Activated CD4-positive, alpha-beta T cell treated with anti-CD3 and anti-CD28 coated beads for 36 hours (primary cell): ENCODE measurements at regions of chr10 and their contacts with region 1.

Region 1: DNA sequence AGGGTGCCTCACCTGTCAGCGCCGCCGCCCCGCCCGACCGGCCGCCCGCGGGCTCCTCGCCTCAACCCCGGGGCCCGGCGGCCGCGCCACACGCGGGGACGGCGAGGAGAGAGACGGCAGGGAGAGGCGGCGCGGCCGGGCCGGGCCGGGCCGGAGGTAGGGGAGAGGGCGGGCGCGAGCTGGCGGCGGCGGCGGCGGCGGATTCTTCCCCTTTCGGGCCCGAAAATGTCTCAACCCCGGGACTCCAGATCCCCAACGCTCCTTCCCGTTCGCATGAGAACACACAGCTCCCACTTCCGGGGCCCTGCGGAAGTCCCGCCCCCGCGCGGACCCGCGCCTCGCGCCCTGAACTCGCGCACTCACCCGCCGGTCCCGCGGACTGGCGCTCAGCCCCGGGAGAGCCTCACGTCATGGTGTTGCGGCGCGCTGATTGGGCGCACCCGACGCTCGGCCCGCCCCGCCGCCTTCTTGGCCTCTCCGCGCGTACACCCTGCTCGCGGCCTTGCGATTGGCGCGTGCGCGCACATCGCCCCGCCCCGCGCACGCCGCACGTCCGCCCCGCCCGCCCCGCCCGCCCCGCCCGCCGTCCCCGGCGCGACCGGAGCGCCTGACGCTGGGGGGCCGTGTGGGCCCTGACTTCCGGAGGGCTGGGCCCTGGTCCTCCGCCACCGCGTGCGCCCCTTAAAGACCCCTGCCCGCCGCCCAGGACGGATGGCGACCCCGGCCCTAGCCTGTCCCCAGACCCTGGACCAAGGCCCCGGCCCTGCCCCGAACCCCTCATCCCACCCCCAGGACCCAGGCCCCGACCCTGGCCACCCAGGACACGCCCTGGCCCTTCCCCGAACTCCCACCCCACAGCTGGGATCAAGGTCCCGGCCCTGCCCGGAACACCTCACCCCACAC is at the start of gene LARP4B:
- DNase-seq: peak; percentile 98
- ATAC-seq: peak; percentile 99
- H3K4me3 Mint-ChIP-seq: peak within 1 kb of the TSS; percentile 82
- H3K27ac Mint-ChIP-seq: peak within 1 kb of the TSS; percentile 85
- H3K4me1 Mint-ChIP-seq: peaks cover 37% of the 10 kb centered on the region
- H3K27me3 Mint-ChIP-seq: no peaks in the 10 kb centered on the region
- total RNA-seq, gene LARP4B: 88.2 to 97.5 TPM

Region 2: DNA sequence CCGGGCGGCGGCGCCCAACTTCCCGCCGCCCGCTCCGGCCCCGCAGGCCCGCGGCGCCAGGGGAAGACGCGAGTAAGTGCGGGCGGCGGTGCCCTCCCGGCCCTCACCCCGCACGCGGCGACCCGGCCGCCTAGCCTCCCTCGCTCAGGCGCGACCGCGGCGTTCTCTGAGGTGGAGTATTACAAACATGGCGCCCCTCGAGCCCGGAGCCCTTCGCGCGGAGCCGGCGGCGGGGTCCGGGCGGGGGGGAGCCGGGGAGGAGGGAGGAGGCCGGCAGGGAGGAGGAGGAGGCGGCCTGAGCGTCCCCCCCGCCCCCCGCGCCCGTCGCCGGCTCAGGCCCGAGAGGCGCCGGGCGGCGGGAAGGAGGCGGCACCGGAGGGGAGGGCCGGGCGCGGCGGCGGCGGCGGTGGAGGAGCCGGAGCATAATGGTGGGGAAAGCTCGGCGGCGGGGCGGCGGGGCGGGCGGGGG is 796.5 kb before region 1 on chr10 and contains the start of gene ZMYND11:
- CTCF ChIA-PET with region 1: no interaction called
- POLR2A ChIA-PET with region 1: no interaction called
- intact Hi-C with region 1: loop called in 1 of 2 experiments (anchors 1 kb)
- DNase-seq: peak; percentile 74
- ATAC-seq: peak; percentile 25
- H3K4me3 Mint-ChIP-seq: peak within 1 kb of the TSS; percentile 84
- H3K27ac Mint-ChIP-seq: peak within 1 kb of the TSS; percentile 90
- H3K4me1 Mint-ChIP-seq: peaks cover 43% of the 10 kb centered on the region
- H3K27me3 Mint-ChIP-seq: no peaks in the 10 kb centered on the region
- total RNA-seq, gene ZMYND11: 13.2 to 16.9 TPM

Region 3: DNA sequence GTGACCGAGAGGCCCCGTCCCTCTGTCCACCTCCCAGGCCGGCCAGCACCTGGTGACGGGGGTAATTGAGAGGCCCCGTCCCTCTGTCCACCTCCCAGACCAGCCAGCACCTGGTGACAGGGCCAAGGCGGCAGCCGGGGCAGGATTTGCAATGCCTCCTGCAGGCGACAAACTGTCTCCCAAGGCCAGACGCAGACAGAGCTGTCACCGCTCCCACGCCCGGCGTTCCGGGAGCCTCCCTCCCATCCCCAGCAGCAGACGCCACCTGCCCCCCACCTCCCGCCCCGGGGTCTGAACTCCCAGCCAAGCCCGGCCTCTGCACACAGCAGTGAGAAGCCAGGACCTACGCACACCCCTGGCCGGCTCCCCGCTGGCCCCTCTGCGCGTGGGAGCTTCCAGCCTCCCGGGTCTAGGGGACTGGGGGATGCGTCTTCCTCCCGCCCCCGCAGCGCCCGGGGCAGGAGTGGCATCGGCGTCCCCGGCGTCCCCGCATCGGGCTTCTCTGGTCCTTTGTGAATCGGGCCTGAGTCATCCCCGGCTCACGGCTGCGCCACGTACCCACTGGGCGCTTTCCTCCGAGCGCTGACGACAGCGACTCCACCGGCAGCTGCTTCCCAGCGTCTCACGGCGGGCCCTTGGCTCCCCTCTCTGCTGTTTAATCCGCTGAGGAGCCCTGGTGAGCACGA is 147.1 kb before region 1 on chr10:
- CTCF ChIA-PET with region 1: no interaction called
- POLR2A ChIA-PET with region 1: no interaction called
- intact Hi-C with region 1: loop called in 1 of 2 experiments (anchors 1 kb)
- DNase-seq: peak; percentile 89
- ATAC-seq: peak; percentile 95
- H3K4me3 Mint-ChIP-seq: no peak overlapping the region
- H3K27ac Mint-ChIP-seq: no peak overlapping the region
- H3K4me1 Mint-ChIP-seq: peaks cover 4% of the 10 kb centered on the region
- H3K27me3 Mint-ChIP-seq: peaks cover 14% of the 10 kb centered on the region

Region 4: DNA sequence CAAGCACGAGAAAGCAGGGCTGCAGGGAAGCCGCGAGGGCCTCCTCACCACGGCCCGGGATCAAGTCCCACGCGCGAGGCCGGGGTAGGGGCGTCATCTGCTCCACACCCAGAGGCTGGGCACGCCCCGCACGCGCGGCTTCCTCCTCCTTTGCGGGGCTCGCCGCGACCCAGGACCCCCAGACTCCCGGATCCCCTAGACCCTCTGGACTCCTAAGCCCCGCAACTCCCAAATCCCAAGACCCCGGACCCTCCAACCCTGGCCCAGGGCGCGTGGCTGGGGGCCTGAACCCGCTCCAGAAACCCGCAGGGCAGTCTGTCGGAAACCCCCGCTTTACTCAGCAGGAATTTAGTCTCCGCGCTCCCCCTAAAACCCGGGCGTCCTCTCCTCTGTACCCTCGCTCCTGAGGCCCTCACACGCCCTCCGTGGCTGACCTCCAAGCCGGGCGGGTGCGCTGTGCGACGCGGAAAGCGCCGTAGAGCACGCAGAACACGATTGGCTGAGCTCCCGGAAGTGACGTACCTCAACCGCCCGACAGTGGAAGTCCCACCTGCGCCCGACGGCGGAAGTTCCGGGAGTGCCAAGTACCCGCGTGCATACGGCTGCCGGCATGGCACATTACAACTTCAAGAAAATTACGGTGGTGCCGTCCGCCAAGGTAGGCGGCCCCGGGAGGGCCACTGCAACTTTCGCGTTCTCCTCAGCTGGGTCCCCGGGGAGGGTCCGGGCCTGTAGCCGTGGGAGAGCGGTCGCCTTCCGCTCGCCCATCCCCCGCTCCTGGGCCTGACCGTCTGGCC is 56.4 kb after region 1 on chr10 and contains the start of gene GTPBP4:
- CTCF ChIA-PET with region 1: interaction called, 3 read pairs
- POLR2A ChIA-PET with region 1: interaction called, 5 read pairs
- intact Hi-C with region 1: loop called (anchors 1 kb)
- DNase-seq: peak; percentile 98
- ATAC-seq: peak; percentile 98
- H3K4me3 Mint-ChIP-seq: peak within 1 kb of the TSS; percentile 93
- H3K27ac Mint-ChIP-seq: peak within 1 kb of the TSS; percentile 96
- H3K4me1 Mint-ChIP-seq: peaks cover 40% of the 10 kb centered on the region
- H3K27me3 Mint-ChIP-seq: no peaks in the 10 kb centered on the region
- total RNA-seq, gene GTPBP4: 109 to 116 TPM

Region 5: DNA sequence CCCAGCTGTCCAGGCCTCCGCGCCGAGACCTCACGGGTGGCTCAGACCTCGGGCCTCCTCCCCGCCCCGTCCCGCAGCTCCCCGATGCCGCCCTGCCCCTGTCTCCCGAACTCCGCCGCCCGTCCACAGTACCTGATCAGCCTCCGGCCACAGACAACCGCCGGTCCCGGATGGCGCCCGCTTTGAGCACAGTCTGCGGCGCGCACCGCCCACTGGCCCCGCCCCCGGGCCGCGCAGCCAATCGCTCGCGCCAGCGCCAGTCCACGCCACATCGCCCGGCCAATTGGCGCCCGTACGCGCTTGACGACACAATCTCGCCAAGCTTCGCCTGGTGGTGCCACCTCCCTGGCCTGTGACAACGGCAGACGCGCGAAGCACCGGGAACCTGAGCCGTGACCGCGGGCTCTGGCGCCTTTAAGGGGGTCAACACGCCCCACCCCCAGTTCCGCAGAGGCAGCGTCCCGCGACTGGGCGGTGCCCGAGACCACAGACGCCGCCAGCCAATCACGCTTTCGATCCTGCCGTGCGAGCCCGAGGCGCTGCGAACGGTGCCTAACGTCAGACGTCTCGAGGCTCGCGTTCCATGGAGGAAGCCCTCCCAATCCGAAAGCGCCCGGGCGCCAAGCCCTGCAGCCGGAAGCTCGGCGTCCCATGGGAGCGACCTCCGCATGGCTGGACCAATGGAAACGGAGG is 117.2 kb after region 1 on chr10 and contains the start of gene IDI1:
- CTCF ChIA-PET with region 1: no interaction called
- POLR2A ChIA-PET with region 1: interaction called, 4 read pairs
- intact Hi-C with region 1: loop called (anchors 1 to 2 kb)
- DNase-seq: peak; percentile 97
- ATAC-seq: peak; percentile 85
- H3K4me3 Mint-ChIP-seq: peak within 1 kb of the TSS; percentile 98
- H3K27ac Mint-ChIP-seq: peak within 1 kb of the TSS; percentile 96
- H3K4me1 Mint-ChIP-seq: peaks cover 64% of the 10 kb centered on the region
- H3K27me3 Mint-ChIP-seq: no peaks in the 10 kb centered on the region
- total RNA-seq, gene IDI1: 40.4 to 66.0 TPM

Region 6: DNA sequence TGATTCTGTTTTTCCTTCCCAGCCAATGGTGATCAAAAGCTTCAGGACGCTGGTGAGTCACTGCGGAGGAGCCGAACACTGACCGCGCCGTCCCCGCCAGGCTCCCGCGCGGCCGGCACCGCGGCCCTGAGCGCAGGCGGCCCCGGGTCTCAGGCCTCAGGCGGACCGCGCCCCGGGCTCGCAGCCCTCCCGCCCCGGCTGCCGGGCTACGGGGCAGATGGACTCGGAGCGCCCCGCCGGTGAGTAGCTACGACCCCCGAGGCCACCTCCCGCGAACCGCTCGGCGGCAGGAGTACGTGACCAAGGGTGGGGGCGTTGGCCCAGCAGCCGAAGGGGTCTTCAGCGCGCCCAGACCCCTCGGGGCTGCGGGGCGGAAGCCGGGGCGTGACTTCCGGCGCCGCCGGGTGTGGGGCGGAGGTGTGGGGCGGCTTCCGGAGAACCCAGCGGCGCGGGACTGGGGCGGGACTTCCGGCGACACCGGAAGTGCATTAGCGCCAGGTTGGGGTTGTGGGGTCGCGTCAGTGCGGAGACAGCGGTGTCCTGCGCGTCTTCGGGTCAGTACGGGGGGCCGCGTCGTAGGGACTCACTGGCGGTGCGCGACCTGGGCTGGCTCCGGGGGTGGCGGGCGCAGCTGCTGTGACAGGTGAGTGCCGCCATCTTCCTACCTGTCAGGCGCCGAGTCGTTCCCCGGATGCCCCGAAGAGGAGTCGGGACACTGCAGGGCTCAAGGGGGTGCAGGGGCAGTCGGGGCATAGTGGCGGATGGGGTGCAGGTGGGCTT is 124.8 kb after region 1 on chr10 and contains the start of gene WDR37:
- CTCF ChIA-PET with region 1: no interaction called
- POLR2A ChIA-PET with region 1: no interaction called
- intact Hi-C with region 1: loop called in 1 of 2 experiments (anchors 1 kb)
- DNase-seq: peak; percentile 92
- ATAC-seq: peak; percentile 94
- H3K4me3 Mint-ChIP-seq: peak within 1 kb of the TSS; percentile 94
- H3K27ac Mint-ChIP-seq: peak within 1 kb of the TSS; percentile 92
- H3K4me1 Mint-ChIP-seq: peaks cover 76% of the 10 kb centered on the region
- H3K27me3 Mint-ChIP-seq: no peaks in the 10 kb centered on the region
- total RNA-seq, gene WDR37: 16.3 to 16.8 TPM